Activated CD4-positive, alpha-beta T cell treated with anti-CD3 and anti-CD28 coated beads, Interleukin-2, amount 10 ng/mL, durations not matched to agents 7 days and 5 days (primary cell): ENCODE measurements at regions of chr10 and their contacts with region 1.

Region 1: GRCh38 chr10:95363303-95363912 is 72.6 kb upstream of the PDLIM1 start:
- DNase-seq: peak; percentile 77
- H3K4me3 Mint-ChIP-seq: no peak overlapping the region
- H3K27ac Mint-ChIP-seq: no peak overlapping the region
- H3K4me1 Mint-ChIP-seq: no peaks in the 10 kb centered on the region
- H3K27me3 Mint-ChIP-seq: peaks cover 18% of the 10 kb centered on the region

Region 2: GRCh38 chr10:95246579-95247051 is 116.8 kb before region 1 on chr10:
- CTCF ChIA-PET with region 1: interaction called, 13 read pairs
- POLR2A ChIA-PET with region 1: interaction called, 4 read pairs
- DNase-seq: peak; percentile 75
- H3K4me3 Mint-ChIP-seq: no peak overlapping the region
- H3K27ac Mint-ChIP-seq: no peak overlapping the region
- H3K4me1 Mint-ChIP-seq: peaks cover 24% of the 10 kb centered on the region
- H3K27me3 Mint-ChIP-seq: peaks cover 3% of the 10 kb centered on the region

Region 3: DNA sequence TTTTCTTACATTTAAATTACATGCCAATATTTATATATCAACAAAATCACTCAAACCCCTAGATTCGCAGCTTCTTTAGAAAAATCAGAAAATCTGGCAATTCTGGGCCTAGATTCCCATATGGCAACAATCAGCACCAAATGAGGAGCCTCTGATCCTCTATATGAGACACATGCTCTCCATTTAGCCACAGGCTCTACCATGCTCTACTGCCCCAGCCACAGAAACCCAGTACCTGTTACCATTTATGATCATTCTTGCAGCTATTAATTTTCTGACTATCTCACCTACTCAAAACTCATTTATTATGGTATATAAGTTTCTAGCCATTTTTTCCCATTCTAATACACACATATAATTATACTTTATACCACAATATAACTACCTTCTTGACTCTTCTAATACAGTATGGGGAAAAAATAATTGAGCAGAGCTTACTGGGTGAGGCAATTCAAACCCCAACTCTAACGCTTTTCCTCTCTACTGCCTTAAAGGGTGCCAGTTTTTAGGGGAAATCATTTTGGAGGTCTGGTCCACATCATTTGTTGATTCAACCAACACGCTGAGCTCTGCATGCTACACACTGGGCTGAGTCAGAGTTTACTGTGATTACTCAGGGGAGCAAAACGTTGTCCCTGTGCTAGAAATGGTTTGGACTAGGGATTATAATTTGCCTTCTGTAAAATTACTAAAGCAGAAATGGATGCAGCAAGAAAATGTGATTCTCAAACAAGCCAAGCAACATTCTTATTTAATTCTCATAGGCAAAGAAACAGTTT is 84.2 kb before region 1 on chr10:
- CTCF ChIA-PET with region 1: no interaction called
- POLR2A ChIA-PET with region 1: no interaction called
- DNase-seq: no peak
- H3K4me3 Mint-ChIP-seq: no peak overlapping the region
- H3K27ac Mint-ChIP-seq: no peak overlapping the region
- H3K4me1 Mint-ChIP-seq: peaks cover 3% of the 10 kb centered on the region
- H3K27me3 Mint-ChIP-seq: peaks cover 15% of the 10 kb centered on the region

Region 4: DNA sequence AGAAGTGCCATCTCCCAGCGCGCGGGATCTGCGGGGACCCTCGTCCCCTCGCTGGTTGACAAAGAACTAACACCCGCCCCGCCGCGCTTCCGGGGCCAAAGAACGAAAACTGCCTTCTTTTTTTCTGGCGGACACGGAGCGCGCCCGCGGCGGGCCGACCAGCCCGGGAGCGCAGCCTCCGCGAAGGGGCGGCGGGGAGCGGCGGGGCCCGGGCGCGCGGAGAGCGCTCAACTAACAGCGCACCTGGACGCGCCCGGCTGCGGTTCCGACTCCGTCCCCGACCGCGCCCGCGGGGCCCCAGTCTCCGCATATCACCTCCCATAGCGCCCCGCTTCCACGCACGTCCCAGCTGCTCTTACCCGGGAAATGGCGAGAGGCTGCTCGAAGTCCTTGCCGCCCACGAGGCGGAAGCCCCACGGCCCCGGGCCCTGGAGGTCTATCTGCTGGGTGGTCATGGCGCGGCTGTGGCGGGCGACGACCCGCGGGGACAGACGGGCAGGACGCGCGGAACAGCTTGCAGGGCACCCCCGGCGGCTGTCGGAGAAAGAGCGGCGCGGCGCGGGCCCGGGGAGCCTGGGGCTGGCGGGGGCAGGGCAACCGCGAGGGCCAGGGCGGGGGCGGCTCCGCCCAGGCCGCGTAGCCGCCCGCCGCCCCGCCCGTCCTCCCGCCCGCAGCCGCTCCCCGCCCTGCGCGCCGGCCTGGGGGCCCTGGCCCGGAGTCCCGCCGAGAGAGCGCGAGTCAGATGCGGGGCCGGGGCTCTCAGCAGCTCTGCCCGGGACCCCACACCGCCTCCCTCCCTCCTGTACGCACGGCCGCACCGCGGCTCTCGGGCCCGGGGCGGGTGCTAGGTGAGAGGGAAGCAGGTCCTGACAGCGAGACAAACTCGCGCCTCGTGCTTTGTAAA is 72.7 kb before region 1 on chr10 and contains the start of gene PDLIM1:
- CTCF ChIA-PET with region 1: no interaction called
- POLR2A ChIA-PET with region 1: no interaction called
- DNase-seq: peak; percentile 48
- H3K4me3 Mint-ChIP-seq: peak within 1 kb of the TSS; percentile 77
- H3K27ac Mint-ChIP-seq: peak within 1 kb of the TSS; percentile 54
- H3K4me1 Mint-ChIP-seq: peaks cover 48% of the 10 kb centered on the region
- H3K27me3 Mint-ChIP-seq: peaks cover 52% of the 10 kb centered on the region
- total RNA-seq, gene PDLIM1: 17.4 to 19.6 TPM

Region 5: DNA sequence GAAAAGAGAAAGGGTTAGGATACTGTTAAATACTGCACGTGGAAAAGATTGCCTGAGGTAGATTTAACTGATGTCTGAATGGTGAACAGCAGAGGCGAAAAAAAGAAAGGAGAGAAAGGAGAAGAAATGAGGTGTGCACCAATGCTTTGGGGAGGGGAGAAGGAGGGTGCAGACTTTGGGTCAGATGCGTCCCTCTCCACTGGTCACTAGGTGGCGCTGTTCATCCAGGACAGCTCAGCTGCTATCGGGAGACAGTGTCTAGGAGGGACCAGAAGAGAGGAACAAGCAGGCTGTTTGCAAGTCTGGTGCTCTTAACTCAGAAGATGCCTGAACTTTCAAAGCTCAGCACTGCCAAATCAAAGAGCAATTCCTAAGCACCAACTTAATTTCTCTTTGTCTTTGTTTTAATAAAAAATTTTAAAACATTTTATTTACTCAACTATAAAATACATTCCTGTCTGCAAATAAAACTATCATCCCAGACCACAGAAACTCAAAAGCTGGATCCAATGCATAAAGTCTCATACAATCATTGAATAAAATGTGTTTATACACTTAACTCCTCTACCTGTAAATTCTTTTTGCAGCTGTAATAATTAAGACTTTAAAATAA is 11.3 kb after region 1 on chr10:
- CTCF ChIA-PET with region 1: interaction called, 32 read pairs
- POLR2A ChIA-PET with region 1: no interaction called
- DNase-seq: peak; percentile 84
- H3K4me3 Mint-ChIP-seq: no peak overlapping the region
- H3K27ac Mint-ChIP-seq: no peak overlapping the region
- H3K4me1 Mint-ChIP-seq: peaks cover 5% of the 10 kb centered on the region
- H3K27me3 Mint-ChIP-seq: peaks cover 27% of the 10 kb centered on the region